ENCODE measurements at regions of chr7 and their contacts with region 1.

Region 1: DNA sequence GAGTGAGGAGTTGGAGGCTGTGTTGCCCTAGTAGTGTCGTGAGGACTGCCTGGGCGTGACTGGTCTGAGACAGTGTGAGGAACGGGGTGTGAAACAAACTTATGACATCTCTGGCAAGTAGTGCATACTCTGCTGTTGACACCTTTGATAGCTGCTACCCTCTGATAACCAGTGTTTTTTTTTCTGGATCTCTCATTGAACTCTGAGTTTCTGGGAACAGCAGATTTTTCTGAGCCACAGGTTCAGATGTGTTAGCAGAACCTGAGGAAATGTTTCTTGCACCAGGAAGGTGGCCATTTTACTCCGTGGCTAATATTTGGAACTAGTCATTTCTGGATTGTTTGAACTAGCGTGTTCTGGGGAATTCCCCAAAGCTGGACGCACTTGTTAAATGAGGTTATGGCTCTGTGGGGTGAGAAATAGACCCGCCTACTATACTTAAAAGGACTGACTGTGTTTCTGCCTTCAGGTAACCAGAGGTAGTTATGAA is 52.9 kb downstream of the AUTS2 start:
- DNase-seq: peak; percentile 75
- ATAC-seq: peak; percentile 79
- H3K4me3 ChIP-seq: no peak overlapping the region
- H3K27ac ChIP-seq: peak overlapping the region; percentile 20
- H3K4me1 ChIP-seq: peaks cover 35% of the 10 kb centered on the region
- H3K27me3 ChIP-seq: no peaks in the 10 kb centered on the region
- CTCF ChIP-seq: no peak
- EP300 ChIP-seq: peak in 1 of 2 experiments; percentile 44; a peak in 2 of 4 replicates
- POLR2A ChIP-seq: no peak
- RAD21 ChIP-seq: no peak

Region 2: GRCh38 chr7:69622960-69623359 is 28.2 kb before region 1 on chr7:
- CTCF ChIA-PET with region 1: interaction called, 3 read pairs
- POLR2A ChIA-PET with region 1: no interaction called
- RAD21 ChIA-PET with region 1: interaction called, 3 read pairs
- SMC1A ChIA-PET with region 1: interaction called, 14 read pairs
- in situ Hi-C with region 1: no loop called
- intact Hi-C with region 1: no loop called
- DNase-seq: no peak
- ATAC-seq: peak; percentile 80
- H3K4me3 ChIP-seq: no peak overlapping the region
- H3K27ac ChIP-seq: no peak overlapping the region
- H3K4me1 ChIP-seq: 0 out of 2 replicates have a peak, but pooled peaks cover 7% of the 10 kb centered on the region
- H3K27me3 ChIP-seq: no peaks in the 10 kb centered on the region
- CTCF ChIP-seq: no peak
- EP300 ChIP-seq: no peak
- POLR2A ChIP-seq: no peak
- RAD21 ChIP-seq: no peak

Region 3: GRCh38 chr7:69663911-69664832 is 13.0 kb after region 1 on chr7:
- CTCF ChIA-PET with region 1: interaction called, 9 read pairs
- POLR2A ChIA-PET with region 1: interaction called, 38 read pairs
- RAD21 ChIA-PET with region 1: interaction called, 42 read pairs
- SMC1A ChIA-PET with region 1: interaction called, 103 read pairs
- in situ Hi-C with region 1: no loop called
- intact Hi-C with region 1: no loop called
- DNase-seq: no peak
- ATAC-seq: peak; percentile 81
- H3K4me3 ChIP-seq: no peak overlapping the region
- H3K27ac ChIP-seq: peak overlapping the region; percentile 6; the same call in 1 of the 2 replicates
- H3K4me1 ChIP-seq: peaks cover 33% of the 10 kb centered on the region
- H3K27me3 ChIP-seq: no peaks in the 10 kb centered on the region
- CTCF ChIP-seq: no peak
- EP300 ChIP-seq: peak in 1 of 2 experiments; percentile 13; a peak in 1 of 4 replicates
- POLR2A ChIP-seq: no peak
- RAD21 ChIP-seq: no peak

Region 4: DNA sequence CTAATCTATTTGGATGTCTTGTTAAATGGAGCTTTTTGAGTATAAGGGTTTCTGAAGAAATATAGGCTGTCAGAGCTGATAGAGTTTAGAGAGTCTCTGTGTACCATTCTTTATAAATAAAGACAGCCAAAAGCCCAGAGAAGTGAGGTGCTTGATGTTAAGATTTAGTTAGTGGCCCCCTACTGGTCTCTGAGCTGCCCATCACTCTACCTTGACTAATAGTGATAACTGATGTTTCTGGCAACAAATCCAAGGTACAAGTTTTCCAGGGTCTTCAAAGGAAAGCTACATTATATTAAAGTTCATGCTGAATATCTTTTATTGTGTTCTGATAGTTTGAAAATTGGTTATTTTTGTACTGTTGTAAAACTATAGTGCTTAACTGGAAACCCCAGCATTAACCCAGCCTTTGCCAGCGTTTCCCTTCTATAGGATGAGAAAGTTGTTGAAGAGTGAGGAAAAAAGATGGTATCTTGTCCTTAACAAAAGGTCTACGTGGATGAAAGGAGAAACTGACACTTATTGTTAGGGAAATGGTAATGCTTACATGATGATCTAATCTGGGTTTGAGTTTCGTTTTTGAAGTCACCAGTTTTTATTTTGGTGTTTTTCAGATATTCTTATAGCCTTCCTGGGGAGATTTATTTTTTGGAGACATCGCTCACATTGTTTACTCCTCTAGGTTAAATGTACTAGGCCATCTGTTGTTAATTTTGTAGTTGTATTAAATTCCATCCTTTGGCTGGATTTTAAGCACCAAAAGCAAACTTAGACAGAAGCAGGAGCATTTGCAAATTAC is 26.1 kb after region 1 on chr7:
- CTCF ChIA-PET with region 1: interaction called, 11 read pairs
- POLR2A ChIA-PET with region 1: interaction called, 4 read pairs
- RAD21 ChIA-PET with region 1: interaction called, 7 read pairs
- SMC1A ChIA-PET with region 1: interaction called, 16 read pairs
- in situ Hi-C with region 1: no loop called
- intact Hi-C with region 1: no loop called
- DNase-seq: no peak
- ATAC-seq: peak; percentile 52
- H3K4me3 ChIP-seq: no peak overlapping the region
- H3K27ac ChIP-seq: peak overlapping the region; percentile 77
- H3K4me1 ChIP-seq: peaks cover 38% of the 10 kb centered on the region
- H3K27me3 ChIP-seq: no peaks in the 10 kb centered on the region
- CTCF ChIP-seq: peak; percentile 41 to 51 (median 45)
- EP300 ChIP-seq: no peak
- POLR2A ChIP-seq: no peak
- RAD21 ChIP-seq: peak; percentile 56

Region 5: DNA sequence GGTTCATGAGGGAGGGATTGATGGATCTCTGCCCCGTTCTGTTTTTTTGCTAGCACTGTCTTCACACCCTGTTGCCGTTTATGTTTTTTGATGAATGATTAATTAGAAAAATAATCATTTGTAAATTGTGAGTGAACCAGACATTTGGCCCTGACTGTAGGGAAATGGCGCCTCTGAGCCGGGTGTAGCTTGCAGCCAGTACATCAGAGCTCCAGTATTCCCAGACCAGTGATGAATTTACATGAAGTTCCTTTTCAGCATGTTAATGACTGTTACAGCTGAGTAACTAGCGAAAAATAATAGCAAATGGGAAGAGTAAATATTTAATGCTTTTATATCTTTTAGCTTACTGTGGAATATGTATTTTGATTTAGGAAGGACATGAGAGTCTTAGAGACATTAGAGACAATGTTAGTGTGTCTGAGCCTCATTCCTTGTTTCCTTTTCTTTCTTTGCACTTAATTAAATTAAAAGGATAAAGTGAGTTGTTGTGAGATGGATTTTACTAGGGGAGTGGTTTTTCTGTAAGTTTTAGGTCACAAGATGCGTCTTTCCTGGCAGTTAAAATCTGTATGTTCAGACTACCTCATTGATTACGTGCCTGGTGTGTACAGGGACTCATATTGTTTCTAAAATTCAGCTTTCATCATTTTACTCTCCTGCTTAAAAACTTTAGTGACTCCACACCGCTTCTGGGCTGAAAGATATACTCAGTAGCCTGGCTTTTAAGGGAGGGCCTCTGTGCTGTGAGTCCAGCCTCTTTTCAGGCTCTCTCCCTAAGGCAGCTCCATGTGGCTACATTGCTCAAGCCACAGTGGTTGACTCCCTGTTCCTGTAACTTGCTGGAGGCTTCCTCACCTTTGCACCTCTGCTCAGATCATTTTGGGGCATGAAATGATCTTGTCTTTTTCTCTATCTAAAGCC is 33.5 kb after region 1 on chr7:
- CTCF ChIA-PET with region 1: no interaction called
- POLR2A ChIA-PET with region 1: interaction called, 4 read pairs
- RAD21 ChIA-PET with region 1: interaction called, 8 read pairs
- SMC1A ChIA-PET with region 1: interaction called, 60 read pairs
- in situ Hi-C with region 1: no loop called
- intact Hi-C with region 1: no loop called
- DNase-seq: no peak
- ATAC-seq: peak; percentile 15
- H3K4me3 ChIP-seq: no peak overlapping the region
- H3K27ac ChIP-seq: peak overlapping the region; percentile 1; the same call in 1 of the 2 replicates
- H3K4me1 ChIP-seq: peaks cover 20% of the 10 kb centered on the region
- H3K27me3 ChIP-seq: no peaks in the 10 kb centered on the region
- CTCF ChIP-seq: no peak
- EP300 ChIP-seq: no peak
- POLR2A ChIP-seq: no peak
- RAD21 ChIP-seq: no peak

Region 6: GRCh38 chr7:69696054-69696591 is 45.0 kb after region 1 on chr7:
- CTCF ChIA-PET with region 1: interaction called, 4 read pairs
- POLR2A ChIA-PET with region 1: interaction called, 3 read pairs
- RAD21 ChIA-PET with region 1: interaction called, 4 read pairs
- SMC1A ChIA-PET with region 1: interaction called, 60 read pairs
- in situ Hi-C with region 1: no loop called
- intact Hi-C with region 1: no loop called
- DNase-seq: peak; percentile 88
- ATAC-seq: peak; percentile 82
- H3K4me3 ChIP-seq: no peak overlapping the region; the same call in 1 of the 2 replicates
- H3K27ac ChIP-seq: peak overlapping the region; percentile 41
- H3K4me1 ChIP-seq: peaks cover 59% of the 10 kb centered on the region
- H3K27me3 ChIP-seq: no peaks in the 10 kb centered on the region
- CTCF ChIP-seq: no peak
- EP300 ChIP-seq: peak; percentile 91 to 97
- POLR2A ChIP-seq: no peak
- RAD21 ChIP-seq: peak; percentile 7; the same call in 1 of the 2 replicates

Region 7: GRCh38 chr7:69796416-69796815 is 145.3 kb after region 1 on chr7:
- CTCF ChIA-PET with region 1: no interaction called
- POLR2A ChIA-PET with region 1: no interaction called
- RAD21 ChIA-PET with region 1: no interaction called
- SMC1A ChIA-PET with region 1: no interaction called
- in situ Hi-C with region 1: no loop called
- intact Hi-C with region 1: no loop called
- DNase-seq: no peak
- ATAC-seq: no peak
- H3K4me3 ChIP-seq: no peak overlapping the region
- H3K27ac ChIP-seq: no peak overlapping the region
- H3K4me1 ChIP-seq: peaks cover 7% of the 10 kb centered on the region; the same call in 1 of the 2 replicates
- H3K27me3 ChIP-seq: no peaks in the 10 kb centered on the region
- CTCF ChIP-seq: no peak
- EP300 ChIP-seq: no peak
- POLR2A ChIP-seq: no peak
- RAD21 ChIP-seq: no peak